Right ventricle myocardium inferior (tissue), 1 donor: ENCODE measurements at regions of chr20 and their contacts with region 1.

Region 1: DNA sequence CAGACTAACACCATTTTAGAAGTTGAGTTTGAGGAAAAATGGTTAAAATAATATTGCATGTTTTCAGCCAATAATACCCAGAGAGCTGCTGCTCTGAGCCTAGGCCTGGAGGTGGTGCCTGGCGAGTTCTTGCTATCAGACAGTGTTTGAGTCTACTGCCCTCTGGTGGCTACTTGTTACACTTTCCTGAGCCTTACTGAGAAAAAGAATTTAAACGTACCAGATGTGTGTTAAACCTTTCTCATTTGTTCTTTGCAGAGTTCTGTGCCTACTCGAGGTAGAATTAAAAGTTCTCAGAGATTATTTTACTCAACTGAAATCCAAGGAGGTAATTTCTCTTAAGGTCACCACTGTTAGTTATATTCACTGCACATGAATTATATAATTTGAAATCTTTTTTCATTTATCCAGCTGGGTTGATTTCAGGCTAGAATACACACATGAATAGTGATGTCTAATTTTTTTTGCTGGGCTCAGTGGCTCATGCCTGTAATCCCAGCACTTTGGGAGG is 38.2 kb downstream of the SHLD1 start:
- DNase-seq: peak; percentile 88
- ATAC-seq: peak; percentile 90

Region 2: GRCh38 chr20:5529331-5530148 is 258.9 kb before region 1 on chr20:
- intact Hi-C with region 1: loop called (anchors 1 kb)
- DNase-seq: peak; percentile 93
- ATAC-seq: peak; percentile 87

Region 3: GRCh38 chr20:5557123-5557522 is 231.3 kb before region 1 on chr20:
- intact Hi-C with region 1: loop called (anchors 2 kb)
- DNase-seq: no peak
- ATAC-seq: no peak

Region 4: GRCh38 chr20:5569021-5569420 is 219.4 kb before region 1 on chr20:
- intact Hi-C with region 1: loop called (anchors 2 kb)
- DNase-seq: no peak
- ATAC-seq: peak; percentile 57

Region 5: DNA sequence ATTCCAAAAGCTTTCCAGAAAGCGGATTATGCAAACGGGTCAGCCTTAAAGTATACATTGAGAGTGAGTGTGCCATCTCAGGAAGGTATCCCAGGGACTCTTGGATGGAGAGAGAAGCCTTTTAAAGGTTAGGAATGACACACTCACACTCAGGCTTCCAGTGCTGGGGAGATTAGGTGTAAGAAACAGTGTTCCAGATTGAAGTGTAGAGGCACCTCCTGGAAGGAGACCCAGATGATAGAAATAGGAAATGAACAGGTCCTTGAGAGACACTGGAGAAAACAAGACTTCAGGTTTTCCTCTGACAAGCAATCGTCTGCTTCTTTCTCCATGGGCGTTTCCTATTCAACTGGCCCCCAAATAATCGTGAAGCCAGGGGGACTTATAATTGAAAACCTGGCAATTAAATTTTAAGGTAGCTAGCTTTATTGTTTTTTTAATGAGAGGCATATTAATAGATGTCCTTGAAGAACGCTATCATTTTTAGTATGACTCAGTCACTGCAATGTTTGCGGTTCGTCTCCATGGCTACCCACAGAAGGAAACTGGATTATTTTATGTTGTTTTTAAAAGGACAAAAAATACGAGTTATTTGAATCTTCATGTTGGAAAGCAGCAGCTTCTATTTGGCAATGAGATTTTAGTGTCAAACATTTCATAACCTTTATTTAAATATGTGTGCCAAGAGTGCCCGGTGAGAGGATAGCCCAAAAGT is 76.6 kb after region 1 on chr20:
- intact Hi-C with region 1: no loop called
- DNase-seq: no peak
- ATAC-seq: no peak